T-cell (primary cell): ENCODE measurements at regions of chr2 and their contacts with region 1.

Region 1: DNA sequence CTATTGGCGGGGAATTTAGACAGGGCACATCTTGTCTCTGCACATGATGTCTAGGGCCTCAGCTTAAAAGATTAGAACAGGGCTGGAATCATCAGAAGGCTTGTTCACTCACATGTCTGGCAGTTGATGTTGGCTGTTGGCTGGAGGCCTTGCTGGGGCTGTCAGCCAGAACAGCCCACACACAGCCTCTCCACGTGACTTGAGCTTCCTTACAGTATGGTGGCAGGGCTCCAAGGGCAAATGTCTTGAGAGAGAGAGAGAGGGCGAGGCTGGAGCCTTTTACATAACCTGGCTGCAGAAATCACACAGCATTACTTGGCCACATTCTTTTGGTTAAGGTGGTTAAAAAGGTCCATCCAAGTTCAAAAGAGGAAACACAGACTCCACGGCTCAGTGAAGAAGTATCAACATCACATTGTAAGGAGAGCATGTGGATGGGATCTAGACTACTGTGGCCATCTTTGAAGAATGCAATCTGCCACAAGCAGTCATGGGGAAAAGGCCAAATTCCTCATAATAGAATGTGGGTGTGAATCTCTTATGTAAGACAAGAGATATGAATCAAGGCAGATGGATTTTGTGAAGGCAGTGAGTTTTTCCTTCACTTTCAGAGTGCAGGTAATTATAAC is 30.4 kb downstream of the SRSF7 start:
- DNase-seq: no peak
- ATAC-seq: no peak
- H3K4me3 ChIP-seq: no peak overlapping the region
- H3K4me3 Mint-ChIP-seq: no peak overlapping the region
- H3K27ac ChIP-seq: peak overlapping the region; percentile 4
- H3K27ac Mint-ChIP-seq: peak overlapping the region; percentile 56 to 77
- H3K4me1 ChIP-seq: peaks cover 14 to 22% of the 10 kb centered on the region in 2 experiments
- H3K4me1 Mint-ChIP-seq: peaks cover 30 to 55% (median 42%) of the 10 kb centered on the region in 3 donors
- H3K27me3 ChIP-seq: no peaks in the 10 kb centered on the region
- H3K27me3 Mint-ChIP-seq: no peaks in the 10 kb centered on the region

Region 2: DNA sequence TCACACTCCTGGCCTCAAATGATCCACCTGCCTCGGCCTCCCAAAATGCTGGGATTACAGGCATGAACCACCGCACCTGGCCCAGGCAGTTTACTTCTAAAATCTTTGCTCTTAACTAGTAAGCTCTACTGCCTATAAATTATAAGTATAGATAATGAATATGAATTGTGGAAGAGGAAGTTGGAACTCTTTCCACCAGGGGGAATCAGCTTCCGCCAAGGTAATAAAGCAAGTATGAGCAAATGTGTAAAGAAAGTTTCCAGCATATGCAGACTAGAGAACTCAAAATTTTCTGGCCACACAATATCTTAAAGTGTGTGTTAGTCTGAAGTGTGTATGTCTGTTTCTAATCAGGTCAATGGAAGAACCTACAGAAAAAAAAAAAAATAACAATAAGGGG is 727.6 kb before region 1 on chr2:
- CTCF ChIA-PET with region 1: no interaction called
- POLR2A ChIA-PET with region 1: no interaction called
- DNase-seq: no peak
- ATAC-seq: no peak
- H3K4me3 ChIP-seq: no peak overlapping the region
- H3K4me3 Mint-ChIP-seq: no peak overlapping the region
- H3K27ac ChIP-seq: no peak overlapping the region
- H3K27ac Mint-ChIP-seq: no peak overlapping the region
- H3K4me1 ChIP-seq: no peaks in the 10 kb centered on the region
- H3K4me1 Mint-ChIP-seq: no peaks in the 10 kb centered on the region
- H3K27me3 ChIP-seq: no peaks in the 10 kb centered on the region
- H3K27me3 Mint-ChIP-seq: no peaks in the 10 kb centered on the region

Region 3: DNA sequence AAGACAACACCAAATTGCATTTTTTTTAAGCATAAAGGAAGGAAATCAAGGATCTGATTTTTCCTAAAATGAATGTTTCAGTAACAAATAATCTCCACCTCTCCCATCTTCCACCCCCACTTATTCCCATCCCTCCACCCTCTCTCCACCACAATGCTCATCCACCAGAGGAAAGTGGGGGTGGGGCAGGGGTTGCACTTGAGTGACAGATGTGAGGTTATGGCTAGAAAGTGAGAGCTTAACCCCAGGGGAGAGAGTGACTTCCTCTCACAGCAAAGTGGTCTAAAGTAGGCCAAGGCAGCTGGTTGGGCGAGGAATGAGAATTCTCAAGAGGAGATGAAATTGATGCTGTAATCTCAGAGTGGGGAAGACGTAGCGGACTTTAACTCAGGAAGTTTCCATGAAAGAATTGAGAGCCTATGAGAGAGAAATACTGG is 222.7 kb before region 1 on chr2:
- CTCF ChIA-PET with region 1: no interaction called
- POLR2A ChIA-PET with region 1: no interaction called
- DNase-seq: no peak
- ATAC-seq: no peak
- H3K4me3 ChIP-seq: no peak overlapping the region
- H3K4me3 Mint-ChIP-seq: no peak overlapping the region
- H3K27ac ChIP-seq: no peak overlapping the region
- H3K27ac Mint-ChIP-seq: no peak overlapping the region
- H3K4me1 ChIP-seq: no peaks in the 10 kb centered on the region
- H3K4me1 Mint-ChIP-seq: peaks cover 4 to 7% (median 6%) of the 10 kb centered on the region in 3 donors
- H3K27me3 ChIP-seq: peaks cover 0 to 18% of the 10 kb centered on the region in 2 experiments
- H3K27me3 Mint-ChIP-seq: peaks cover 8 to 13% of the 10 kb centered on the region in 2 donors

Region 4: DNA sequence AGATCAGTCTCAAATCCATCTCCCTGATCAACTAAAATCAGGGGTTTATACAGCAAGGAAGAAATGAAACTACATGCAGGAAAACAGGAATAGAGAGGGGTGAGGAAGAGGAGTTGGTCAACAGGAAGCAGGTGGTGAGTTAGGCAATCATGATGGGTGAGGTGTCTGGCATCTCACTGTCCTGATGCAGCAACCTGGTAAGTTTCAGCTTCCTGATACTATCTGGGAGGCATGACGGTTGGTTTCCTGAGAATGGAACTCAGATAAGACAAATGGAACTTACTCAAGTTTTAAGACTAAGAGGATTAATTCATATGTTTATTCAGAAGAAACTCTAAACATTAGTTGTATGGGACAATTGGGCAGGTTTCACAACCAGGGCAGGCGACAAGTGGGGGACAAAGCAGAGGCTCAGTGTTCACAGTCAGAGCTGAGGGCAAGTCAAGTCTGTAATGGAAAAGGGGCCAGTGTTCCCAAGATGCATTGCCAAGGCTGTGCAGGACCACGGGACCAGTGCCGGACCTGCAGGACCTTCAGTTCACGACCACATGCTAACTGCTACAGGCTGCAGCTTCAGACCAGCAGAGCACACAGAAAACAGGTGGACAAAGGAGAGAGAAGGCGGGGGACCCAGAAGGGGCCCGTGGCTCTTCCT is 72.5 kb before region 1 on chr2:
- CTCF ChIA-PET with region 1: interaction called in 1 of 2 experiments, 18 read pairs
- POLR2A ChIA-PET with region 1: no interaction called
- DNase-seq: no peak
- ATAC-seq: no peak
- H3K4me3 ChIP-seq: no peak overlapping the region
- H3K4me3 Mint-ChIP-seq: no peak overlapping the region
- H3K27ac ChIP-seq: no peak overlapping the region
- H3K27ac Mint-ChIP-seq: peak overlapping the region; percentile 44 to 50
- H3K4me1 ChIP-seq: peaks cover 2 to 33% of the 10 kb centered on the region in 2 experiments
- H3K4me1 Mint-ChIP-seq: peaks cover 29 to 58% (median 34%) of the 10 kb centered on the region in 3 donors
- H3K27me3 ChIP-seq: no peaks in the 10 kb centered on the region
- H3K27me3 Mint-ChIP-seq: no peaks in the 10 kb centered on the region

Region 5: DNA sequence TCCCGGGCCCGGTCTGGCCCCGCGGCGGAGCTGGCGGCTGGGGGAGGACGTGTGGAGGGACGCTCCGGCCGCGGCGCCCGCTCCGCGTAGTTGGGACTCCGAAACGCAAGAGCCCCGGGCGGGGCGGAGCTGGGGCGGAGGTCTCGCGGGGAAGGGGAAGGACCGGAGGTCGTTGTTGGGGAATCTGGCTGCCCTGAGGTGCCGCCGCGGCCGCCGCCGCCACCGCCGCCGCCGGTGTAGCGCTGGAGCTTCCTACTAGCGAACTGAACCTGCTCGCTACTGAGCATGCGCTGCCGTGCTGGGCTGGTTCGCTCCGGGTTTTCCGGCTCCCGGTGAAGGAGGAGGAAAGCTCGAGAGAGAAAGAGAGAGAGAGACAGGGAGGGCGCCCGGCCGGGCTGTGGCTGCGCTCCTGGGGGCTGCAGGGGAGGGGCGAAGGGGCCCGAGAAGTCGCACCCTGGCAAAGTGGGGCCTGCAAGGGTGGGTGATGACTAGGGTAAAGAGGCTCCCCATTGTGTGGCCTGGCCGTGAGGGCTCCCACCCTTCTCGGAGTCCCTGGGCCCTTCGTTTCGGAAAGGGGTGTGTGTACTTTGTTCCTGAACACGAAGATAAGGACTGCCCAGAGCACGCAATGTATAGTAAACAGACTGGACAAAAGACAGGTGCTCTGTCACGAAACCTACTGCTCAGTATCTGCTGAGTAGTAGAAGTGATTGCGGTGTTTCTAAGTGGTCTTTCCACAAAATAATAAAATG is 400.2 kb after region 1 on chr2 and contains the start of gene SOS1:
- CTCF ChIA-PET with region 1: no interaction called
- POLR2A ChIA-PET with region 1: no interaction called
- DNase-seq: peak; percentile 82 to 96 (median 88)
- ATAC-seq: peak; percentile 58 to 65 (median 60)
- H3K4me3 ChIP-seq: peak within 1 kb of the TSS; percentile 73 to 90
- H3K4me3 Mint-ChIP-seq: peak within 1 kb of the TSS; percentile 90 to 98 (median 93)
- H3K27ac ChIP-seq: peak within 1 kb of the TSS; percentile 82
- H3K27ac Mint-ChIP-seq: peak within 1 kb of the TSS; percentile 98
- H3K4me1 ChIP-seq: peaks cover 33 to 41% of the 10 kb centered on the region in 2 experiments
- H3K4me1 Mint-ChIP-seq: peaks cover 63 to 78% (median 73%) of the 10 kb centered on the region in 3 donors
- H3K27me3 ChIP-seq: no peaks in the 10 kb centered on the region
- H3K27me3 Mint-ChIP-seq: no peaks in the 10 kb centered on the region
- total RNA-seq, gene SOS1: 44.3 to 138 (median 82.9) TPM